ENCODE measurements at regions of chr2 and their contacts with region 1.

Region 1: DNA sequence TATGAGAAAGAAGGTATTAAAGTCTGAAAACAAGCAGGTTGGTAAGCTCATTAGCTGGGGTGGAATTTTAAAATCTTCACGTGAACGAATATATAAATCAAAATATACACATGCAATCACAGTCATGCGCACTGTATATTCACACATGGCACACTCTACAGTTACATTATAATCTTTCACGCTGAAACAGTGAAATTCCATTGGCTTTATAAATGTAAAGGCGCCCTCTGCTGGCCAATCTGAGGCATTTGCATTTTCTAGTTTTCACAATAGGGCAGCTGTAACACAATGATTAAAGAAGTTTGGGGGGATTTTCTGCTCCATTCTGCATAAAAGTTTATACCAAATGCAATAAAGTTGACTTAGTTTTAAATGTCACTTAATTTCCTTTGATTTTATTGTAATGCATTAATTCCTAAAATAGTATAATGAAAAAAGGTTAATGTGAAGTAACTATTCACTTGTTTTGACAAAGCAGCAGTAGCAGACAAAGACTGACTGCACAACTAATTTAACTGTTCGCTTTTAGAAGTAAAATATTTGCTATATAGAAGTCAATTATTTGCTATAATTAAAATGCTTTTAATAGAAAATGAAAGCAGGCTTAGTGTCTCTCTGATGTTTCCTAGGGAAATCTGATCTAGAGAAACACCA is 17.2 kb downstream of the IFIH1 start:
- DNase-seq: peak; percentile 69
- ATAC-seq: peak; percentile 69
- H3K4me3 Mint-ChIP-seq: no peak overlapping the region
- H3K27ac Mint-ChIP-seq: no peak overlapping the region
- H3K4me1 Mint-ChIP-seq: no peaks in the 10 kb centered on the region
- H3K27me3 Mint-ChIP-seq: no peaks in the 10 kb centered on the region
- CTCF ChIP-seq: peak; percentile 93

Region 2: DNA sequence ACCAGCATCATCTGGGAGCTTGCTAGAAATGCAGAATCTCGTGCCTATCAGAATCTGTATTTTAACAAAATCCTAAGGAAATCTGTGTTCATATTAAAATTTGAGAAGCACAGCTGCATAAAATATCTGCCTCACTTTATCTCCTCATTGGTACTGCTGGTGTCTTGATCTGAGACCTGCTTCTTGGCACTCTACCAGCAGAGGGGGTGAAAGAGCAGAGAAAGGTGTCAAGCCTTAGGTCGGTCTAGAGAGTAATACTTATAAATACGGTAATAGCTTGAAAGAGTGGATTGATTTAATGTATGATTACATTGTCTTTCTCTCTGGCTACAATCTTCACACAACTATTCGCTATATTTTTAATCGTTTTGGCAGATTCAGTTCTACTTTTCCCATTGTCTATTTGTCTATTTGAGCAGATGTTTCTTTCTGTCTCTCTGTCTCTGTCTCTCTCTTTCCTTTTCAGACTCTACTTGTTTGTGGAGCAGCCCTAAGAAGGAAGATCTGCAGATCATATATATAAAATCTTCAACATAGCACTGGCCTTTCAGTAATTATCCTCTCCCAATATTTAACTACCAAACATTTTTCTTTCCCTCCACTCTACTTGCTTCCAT is 147.6 kb before region 1 on chr2:
- CTCF ChIA-PET with region 1: interaction called, 38 read pairs
- POLR2A ChIA-PET with region 1: no interaction called
- intact Hi-C with region 1: loop called (anchors 2 kb)
- DNase-seq: peak; percentile 79
- ATAC-seq: peak; percentile 96
- H3K4me3 Mint-ChIP-seq: no peak overlapping the region
- H3K27ac Mint-ChIP-seq: no peak overlapping the region
- H3K4me1 Mint-ChIP-seq: no peaks in the 10 kb centered on the region
- H3K27me3 Mint-ChIP-seq: peaks cover 19% of the 10 kb centered on the region
- CTCF ChIP-seq: peak; percentile 76

Region 3: DNA sequence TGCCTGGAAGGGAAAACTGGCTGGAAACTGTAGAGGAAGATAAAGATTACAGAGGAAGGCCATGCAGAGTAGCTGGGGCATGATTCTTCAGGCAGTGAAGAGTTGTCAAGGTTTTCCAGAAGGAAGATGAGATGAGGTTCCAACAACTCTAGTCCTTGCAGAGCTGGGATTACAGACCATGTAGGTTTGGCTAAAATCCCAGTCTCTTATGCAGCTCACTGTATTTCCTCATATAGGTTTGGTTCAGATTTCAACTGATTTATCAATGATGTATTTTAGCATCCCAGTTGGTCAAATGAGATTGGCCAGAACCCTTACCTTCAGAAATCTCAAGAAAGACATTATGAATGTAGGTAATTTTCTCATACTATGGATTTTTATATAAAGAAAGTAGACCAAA is 74.4 kb before region 1 on chr2:
- CTCF ChIA-PET with region 1: interaction called, 292 read pairs
- POLR2A ChIA-PET with region 1: no interaction called
- intact Hi-C with region 1: no loop called
- DNase-seq: no peak
- ATAC-seq: no peak
- H3K4me3 Mint-ChIP-seq: no peak overlapping the region
- H3K27ac Mint-ChIP-seq: no peak overlapping the region
- H3K4me1 Mint-ChIP-seq: no peaks in the 10 kb centered on the region
- H3K27me3 Mint-ChIP-seq: peaks cover 2% of the 10 kb centered on the region
- CTCF ChIP-seq: no peak

Region 4: DNA sequence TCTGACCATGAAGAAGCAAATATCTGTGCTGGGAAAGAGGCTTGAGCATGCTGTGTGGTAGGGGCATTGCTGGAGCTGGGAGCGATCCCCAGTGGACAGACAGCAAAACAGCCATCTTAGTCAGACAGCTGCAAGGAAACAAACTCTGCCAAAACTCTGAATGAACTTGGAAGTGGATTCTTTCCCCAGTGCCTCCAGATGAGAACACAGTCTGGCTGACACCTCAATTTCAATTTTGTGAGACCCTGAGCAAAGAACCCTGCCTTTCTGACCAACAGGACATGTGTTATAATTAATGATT is 34.9 kb before region 1 on chr2:
- CTCF ChIA-PET with region 1: interaction called, 14 read pairs
- POLR2A ChIA-PET with region 1: no interaction called
- intact Hi-C with region 1: no loop called
- DNase-seq: no peak
- ATAC-seq: no peak
- H3K4me3 Mint-ChIP-seq: no peak overlapping the region
- H3K27ac Mint-ChIP-seq: no peak overlapping the region
- H3K4me1 Mint-ChIP-seq: peaks cover 6% of the 10 kb centered on the region
- H3K27me3 Mint-ChIP-seq: no peaks in the 10 kb centered on the region
- CTCF ChIP-seq: no peak

Region 5: DNA sequence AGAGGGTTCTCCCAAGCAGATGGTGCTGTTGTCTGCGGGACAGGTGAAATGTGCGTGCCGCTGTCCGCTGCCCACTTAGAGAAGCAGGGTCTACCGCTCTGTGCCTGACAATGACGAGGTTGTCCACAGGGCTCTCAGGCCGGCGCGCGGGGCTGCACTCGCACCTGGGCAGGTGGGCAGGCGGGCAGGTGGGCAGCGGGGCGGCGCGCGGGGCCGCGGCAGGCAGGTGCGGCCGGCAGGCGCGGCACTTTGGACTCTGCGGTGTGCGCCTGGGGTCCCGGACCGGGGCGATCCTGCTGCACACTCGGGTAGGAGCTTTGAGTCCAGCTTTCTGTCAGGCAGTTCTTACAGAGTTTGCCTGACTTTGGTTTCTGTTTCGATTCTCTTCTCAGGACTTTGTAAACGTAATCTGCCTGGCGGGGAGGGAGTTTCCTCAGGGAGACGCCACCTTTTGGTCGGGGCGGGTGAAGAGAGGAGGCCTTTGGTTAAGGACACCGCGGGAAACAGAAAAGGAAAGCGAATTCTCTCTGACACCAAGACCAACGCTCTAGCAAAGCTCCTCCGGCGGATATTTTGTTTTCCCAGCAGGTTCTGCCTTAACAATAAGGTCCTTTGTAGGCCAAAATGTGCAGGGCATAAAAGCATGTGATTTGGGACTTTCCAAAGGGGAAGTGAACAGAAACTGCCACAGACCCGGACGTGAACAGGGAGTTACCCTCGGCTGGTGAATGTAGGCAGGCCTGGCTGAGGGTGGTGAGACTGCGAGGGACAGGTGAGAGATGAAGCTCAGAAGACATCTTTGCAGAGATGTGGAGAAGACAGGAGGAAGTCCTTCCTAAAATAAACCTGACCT is 17.3 kb after region 1 on chr2 and contains the start of gene IFIH1:
- CTCF ChIA-PET with region 1: interaction called, 40 read pairs
- POLR2A ChIA-PET with region 1: interaction called, 14 read pairs
- intact Hi-C with region 1: no loop called
- DNase-seq: peak; percentile 85
- ATAC-seq: peak; percentile 91
- H3K4me3 Mint-ChIP-seq: peak within 1 kb of the TSS; percentile 82
- H3K27ac Mint-ChIP-seq: peak within 1 kb of the TSS; percentile 95
- H3K4me1 Mint-ChIP-seq: peaks cover 49% of the 10 kb centered on the region
- H3K27me3 Mint-ChIP-seq: no peaks in the 10 kb centered on the region
- CTCF ChIP-seq: peak; percentile 30
- total RNA-seq, gene IFIH1: 28.7 to 29.1 TPM

Region 6: DNA sequence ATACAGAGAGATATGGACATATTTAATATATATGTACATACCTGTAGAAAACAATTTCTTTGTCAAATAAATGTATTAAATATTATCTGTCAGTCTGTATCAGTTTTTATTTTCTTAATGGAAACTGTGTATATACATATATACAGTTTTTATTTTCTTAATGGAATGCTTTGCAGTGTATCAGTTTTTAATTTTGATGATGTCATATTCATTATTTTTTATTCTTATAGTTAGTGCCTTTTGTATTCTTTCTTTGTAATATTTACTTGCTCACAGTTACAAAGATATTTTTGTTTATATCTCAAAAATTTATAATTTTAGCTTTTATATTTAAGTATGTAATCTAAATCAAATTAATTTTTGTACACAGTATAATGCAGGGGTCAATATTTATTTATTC is 516.6 kb after region 1 on chr2:
- CTCF ChIA-PET with region 1: no interaction called
- POLR2A ChIA-PET with region 1: no interaction called
- intact Hi-C with region 1: no loop called
- DNase-seq: no peak
- ATAC-seq: no peak
- H3K4me3 Mint-ChIP-seq: no peak overlapping the region
- H3K27ac Mint-ChIP-seq: no peak overlapping the region
- H3K4me1 Mint-ChIP-seq: no peaks in the 10 kb centered on the region
- H3K27me3 Mint-ChIP-seq: no peaks in the 10 kb centered on the region
- CTCF ChIP-seq: no peak

Measured in activated CD8-positive, alpha-beta T cell treated with anti-CD3 and anti-CD28 coated beads for 36 hours (primary cell).